ENCODE measurements at regions of chr10 and their contacts with region 1.

Region 1: GRCh38 chr10:118046395-118047156 is at the start of gene RAB11FIP2:
- DNase-seq: peak; percentile 96 to 98
- ATAC-seq: peak; percentile 91 to 94 (median 92)
- H3K4me3 ChIP-seq: peak within 1 kb of the TSS; percentile 86
- H3K27ac ChIP-seq: peak within 1 kb of the TSS; percentile 93
- H3K4me1 ChIP-seq: peaks cover 37% of the 10 kb centered on the region
- H3K27me3 ChIP-seq: no peaks in the 10 kb centered on the region
- CTCF ChIP-seq: peak; percentile 21
- total RNA-seq, gene RAB11FIP2: 9.1 to 12.0 (median 10.5) TPM

Region 2: GRCh38 chr10:118341791-118342637 is 295.4 kb after region 1 on chr10 and contains the start of gene FAM204A:
- intact Hi-C with region 1: loop called in 1 of 2 experiments (anchors 5 kb)
- DNase-seq: peak; percentile 92 to 96
- ATAC-seq: peak; percentile 97 to 99 (median 98)
- H3K4me3 ChIP-seq: peak within 1 kb of the TSS; percentile 78
- H3K27ac ChIP-seq: peak within 1 kb of the TSS; percentile 88
- H3K4me1 ChIP-seq: peaks cover 42% of the 10 kb centered on the region
- H3K27me3 ChIP-seq: no peaks in the 10 kb centered on the region
- CTCF ChIP-seq: no peak
- total RNA-seq, gene FAM204A: 45.3 to 75.9 (median 61.1) TPM